Activated CD4-positive, alpha-beta T cell treated with anti-CD3 and anti-CD28 coated beads for 36 hours (primary cell): ENCODE measurements at regions of chr1 and their contacts with region 1.

Region 1: DNA sequence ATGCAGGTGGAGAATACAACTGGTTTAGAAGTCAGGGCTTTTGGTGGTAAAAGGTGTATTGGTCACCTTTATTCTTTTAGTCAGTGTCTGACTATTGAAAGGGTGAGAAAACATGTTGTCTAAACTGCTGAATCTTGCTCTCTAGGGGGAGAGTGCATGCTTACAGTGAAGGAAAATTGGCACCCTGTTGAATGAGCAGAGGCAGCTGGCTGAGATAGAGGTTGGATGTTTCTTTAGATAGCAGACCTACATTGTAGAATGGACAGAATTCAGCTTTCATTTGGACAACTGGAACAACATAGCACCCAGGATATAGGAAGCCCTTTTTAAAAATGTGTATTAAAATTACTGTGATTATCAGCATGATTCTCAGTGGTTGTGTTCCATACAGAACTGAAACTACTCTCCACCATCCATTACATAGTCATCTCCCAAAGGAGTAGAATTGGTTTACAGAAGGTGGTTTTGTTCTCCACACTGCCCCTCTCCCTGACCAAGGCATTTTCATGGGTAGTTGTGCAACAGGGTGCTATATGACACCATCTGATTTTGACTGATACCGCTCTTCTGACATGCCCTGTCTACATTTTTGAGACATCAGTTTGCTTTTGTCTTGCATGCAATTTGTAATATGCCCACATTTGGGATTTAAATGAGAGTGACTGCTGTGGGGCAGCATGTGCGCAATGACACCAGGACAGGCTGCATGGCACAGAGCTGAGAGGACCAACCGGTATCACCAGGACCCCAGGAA is 16.3 kb downstream of the RHOU start:
- DNase-seq: peak; percentile 24
- ATAC-seq: peak; percentile 58
- H3K4me3 Mint-ChIP-seq: no peak overlapping the region
- H3K27ac Mint-ChIP-seq: no peak overlapping the region
- H3K4me1 Mint-ChIP-seq: peaks cover 16% of the 10 kb centered on the region
- H3K27me3 Mint-ChIP-seq: peaks cover 22% of the 10 kb centered on the region

Region 2: GRCh38 chr1:228691926-228692325 is 59.6 kb before region 1 on chr1:
- CTCF ChIA-PET with region 1: no interaction called
- POLR2A ChIA-PET with region 1: no interaction called
- intact Hi-C with region 1: no loop called
- DNase-seq: peak; percentile 30
- ATAC-seq: no peak
- H3K4me3 Mint-ChIP-seq: no peak overlapping the region
- H3K27ac Mint-ChIP-seq: no peak overlapping the region
- H3K4me1 Mint-ChIP-seq: peaks cover 10% of the 10 kb centered on the region
- H3K27me3 Mint-ChIP-seq: no peaks in the 10 kb centered on the region

Region 3: GRCh38 chr1:228776449-228776848 is 24.9 kb after region 1 on chr1:
- CTCF ChIA-PET with region 1: no interaction called
- POLR2A ChIA-PET with region 1: no interaction called
- intact Hi-C with region 1: no loop called
- DNase-seq: no peak
- ATAC-seq: no peak
- H3K4me3 Mint-ChIP-seq: no peak overlapping the region
- H3K27ac Mint-ChIP-seq: no peak overlapping the region
- H3K4me1 Mint-ChIP-seq: no peaks in the 10 kb centered on the region
- H3K27me3 Mint-ChIP-seq: no peaks in the 10 kb centered on the region

Region 4: DNA sequence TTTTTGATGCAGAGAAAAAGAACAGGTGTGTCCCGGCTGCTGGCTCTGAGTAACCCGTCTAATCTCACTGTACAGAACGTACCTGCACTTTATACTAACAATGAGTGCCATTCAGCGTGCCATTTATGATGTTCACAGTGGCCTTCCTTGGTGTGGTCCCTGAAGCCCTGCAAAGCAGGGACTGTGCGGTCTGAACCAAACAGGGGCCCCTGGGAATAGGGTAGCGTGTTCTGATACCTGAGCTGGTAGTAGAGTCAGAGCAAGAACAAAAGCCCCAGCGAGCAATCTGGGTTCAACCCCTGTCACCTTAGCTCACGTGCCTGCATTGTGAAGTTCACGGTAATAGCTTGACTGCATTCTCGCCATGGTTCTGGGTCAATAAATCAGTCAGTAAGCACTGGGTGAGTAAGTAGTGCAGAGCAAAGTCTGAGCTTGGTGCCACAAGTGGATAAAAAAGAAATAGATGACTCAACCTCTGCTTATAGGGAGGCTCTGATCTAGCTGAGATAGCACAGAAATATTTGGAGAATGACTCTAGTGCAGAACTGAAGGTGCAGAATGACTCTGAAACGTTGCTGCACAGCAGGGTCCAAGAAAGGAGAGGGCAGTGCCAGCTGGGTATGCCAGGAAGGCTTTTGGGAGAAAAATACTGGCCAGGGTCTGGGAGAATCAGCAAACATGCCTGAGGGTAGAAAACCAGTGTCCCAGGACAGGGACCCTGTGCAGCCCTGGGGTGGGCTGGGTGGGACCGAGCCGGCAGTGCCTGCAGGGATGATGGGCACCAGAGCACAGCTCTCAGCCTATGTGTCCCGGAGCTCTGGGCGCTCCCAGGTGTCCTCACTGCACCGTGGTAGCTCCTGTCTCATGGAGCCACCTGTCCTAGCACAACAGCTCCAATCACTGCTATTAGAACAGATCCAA is 109.6 kb after region 1 on chr1:
- CTCF ChIA-PET with region 1: no interaction called
- POLR2A ChIA-PET with region 1: no interaction called
- intact Hi-C with region 1: loop called (anchors 5 to 10 kb)
- DNase-seq: peak; percentile 58
- ATAC-seq: peak; percentile 90
- H3K4me3 Mint-ChIP-seq: no peak overlapping the region
- H3K27ac Mint-ChIP-seq: no peak overlapping the region
- H3K4me1 Mint-ChIP-seq: peaks cover 29% of the 10 kb centered on the region
- H3K27me3 Mint-ChIP-seq: peaks cover 3% of the 10 kb centered on the region

Region 5: GRCh38 chr1:229094476-229095311 is 343.2 kb after region 1 on chr1:
- CTCF ChIA-PET with region 1: no interaction called
- POLR2A ChIA-PET with region 1: no interaction called
- intact Hi-C with region 1: no loop called
- DNase-seq: no peak
- ATAC-seq: no peak
- H3K4me3 Mint-ChIP-seq: no peak overlapping the region
- H3K27ac Mint-ChIP-seq: no peak overlapping the region
- H3K4me1 Mint-ChIP-seq: peaks cover 10% of the 10 kb centered on the region
- H3K27me3 Mint-ChIP-seq: no peaks in the 10 kb centered on the region